Right cardiac atrium (tissue), 5 donors: ENCODE measurements at regions of chr1 and their contacts with region 1.

Region 1: GRCh38 chr1:9455487-9456234 is 83.6 kb upstream of the SLC25A33 start:
- DNase-seq: peak; percentile 78 to 93 (median 89)
- ATAC-seq: peak; percentile 81 to 84
- H3K4me3 ChIP-seq: no peak overlapping the region
- H3K27ac ChIP-seq: no peak overlapping the region
- H3K4me1 ChIP-seq: no peaks in the 10 kb centered on the region
- H3K27me3 ChIP-seq: no peaks in the 10 kb centered on the region

Region 2: GRCh38 chr1:9269078-9269501 is 186.6 kb before region 1 on chr1:
- intact Hi-C with region 1: loop called in 2 of 4 experiments (anchors 5 to 10 kb)
- DNase-seq: peak in 1 of 3 donors; percentile 35
- ATAC-seq: peak in 1 of 2 donors; percentile 2
- H3K4me3 ChIP-seq: no peak overlapping the region
- H3K27ac ChIP-seq: no peak overlapping the region
- H3K4me1 ChIP-seq: no peaks in the 10 kb centered on the region
- H3K27me3 ChIP-seq: no peaks in the 10 kb centered on the region

Region 3: DNA sequence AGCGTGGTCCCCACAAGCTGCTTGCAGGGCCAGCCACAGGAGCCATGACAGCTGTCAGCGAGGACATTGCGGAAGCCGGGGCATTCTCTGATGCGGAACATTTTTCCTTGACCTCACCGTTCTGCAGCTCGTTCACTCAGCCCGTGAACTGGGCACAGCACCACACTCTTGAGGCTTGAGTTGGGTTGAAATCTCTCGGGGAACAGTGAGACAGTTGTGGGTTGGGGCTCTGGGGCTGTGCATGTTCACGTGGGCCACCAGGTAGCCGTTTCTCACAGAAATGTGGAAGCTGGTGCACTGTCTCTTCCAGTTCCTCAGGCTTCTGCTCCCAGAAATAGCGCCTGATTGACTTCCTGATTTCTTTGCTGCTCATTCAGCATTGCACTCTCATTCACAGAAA is 93.2 kb before region 1 on chr1:
- intact Hi-C with region 1: loop called in 1 of 4 experiments (anchors 10 kb)
- DNase-seq: peak in 1 of 3 donors; percentile 33
- ATAC-seq: no peak
- H3K4me3 ChIP-seq: no peak overlapping the region
- H3K27ac ChIP-seq: no peak overlapping the region
- H3K4me1 ChIP-seq: no peaks in the 10 kb centered on the region
- H3K27me3 ChIP-seq: no peaks in the 10 kb centered on the region